ENCODE measurements at regions of chr22 and their contacts with region 1.

Region 1: GRCh38 chr22:28882878-28883656 is at the start of gene ZNRF3:
- DNase-seq: peak; percentile 94
- H3K4me3 ChIP-seq: peak within 1 kb of the TSS; percentile 72
- H3K4me3 Mint-ChIP-seq: peak within 1 kb of the TSS; percentile 83
- H3K27ac Mint-ChIP-seq: peak within 1 kb of the TSS; percentile 93
- H3K4me1 ChIP-seq: peaks cover 35% of the 10 kb centered on the region
- H3K4me1 Mint-ChIP-seq: peaks cover 28% of the 10 kb centered on the region
- H3K27me3 ChIP-seq: no peaks in the 10 kb centered on the region
- H3K27me3 Mint-ChIP-seq: no peaks in the 10 kb centered on the region
- CTCF ChIP-seq: no peak
- total RNA-seq, gene ZNRF3: 37.9 and 41.1 TPM in 2 replicates

Region 2: GRCh38 chr22:28829358-28830181 is 53.5 kb before region 1 on chr22:
- CTCF ChIA-PET with region 1: no interaction called
- POLR2A ChIA-PET with region 1: interaction called, 9 read pairs
- intact Hi-C with region 1: loop called (anchors 2 kb)
- DNase-seq: peak; percentile 70 to 80
- H3K4me3 ChIP-seq: no peak overlapping the region
- H3K4me3 Mint-ChIP-seq: no peak overlapping the region
- H3K27ac Mint-ChIP-seq: no peak overlapping the region
- H3K4me1 ChIP-seq: 0 out of 2 replicates have a peak, but pooled peaks cover 5% of the 10 kb centered on the region
- H3K4me1 Mint-ChIP-seq: peaks cover 9% of the 10 kb centered on the region
- H3K27me3 ChIP-seq: no peaks in the 10 kb centered on the region
- H3K27me3 Mint-ChIP-seq: no peaks in the 10 kb centered on the region
- CTCF ChIP-seq: peak; percentile 93 to 97

Region 3: DNA sequence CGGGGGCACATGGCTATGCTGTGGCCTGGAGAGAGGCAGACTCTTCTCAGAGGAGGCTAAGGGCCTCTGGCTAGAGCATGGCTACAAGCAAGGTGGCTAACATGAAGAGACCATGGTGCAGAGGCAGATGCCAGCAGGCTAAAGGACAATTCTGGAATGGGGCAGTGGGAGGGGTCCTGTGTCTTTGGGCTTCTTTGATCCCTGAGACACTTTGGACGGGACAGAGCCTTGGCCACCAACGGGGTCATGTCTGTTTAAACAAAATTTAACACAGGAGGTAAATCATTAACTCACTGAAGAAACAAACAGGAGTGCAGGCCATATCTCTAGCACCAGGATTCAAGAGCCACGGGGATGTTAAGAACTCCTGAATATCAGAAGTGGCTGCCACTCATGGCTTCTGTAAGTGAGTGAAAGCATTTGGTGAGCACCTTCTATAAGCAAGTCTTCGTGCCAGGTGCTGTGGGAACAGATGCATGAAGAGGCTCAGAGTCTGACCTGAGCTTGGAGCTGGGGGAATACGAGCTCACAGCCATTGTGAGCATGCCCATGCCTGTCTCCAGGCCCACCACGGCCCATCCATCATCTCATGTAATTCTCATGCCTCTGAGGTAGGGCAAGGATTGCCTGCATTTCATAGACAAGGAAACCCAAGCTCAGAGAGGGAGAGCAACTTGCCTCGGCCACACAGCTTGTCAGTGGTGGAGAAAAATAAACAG is 18.0 kb before region 1 on chr22:
- CTCF ChIA-PET with region 1: no interaction called
- POLR2A ChIA-PET with region 1: no interaction called
- intact Hi-C with region 1: loop called (anchors 1 kb)
- DNase-seq: peak; percentile 85 to 91
- H3K4me3 ChIP-seq: no peak overlapping the region
- H3K4me3 Mint-ChIP-seq: peak overlapping the region; percentile 40
- H3K27ac Mint-ChIP-seq: peak overlapping the region; percentile 82
- H3K4me1 ChIP-seq: peaks cover 23% of the 10 kb centered on the region
- H3K4me1 Mint-ChIP-seq: peaks cover 36% of the 10 kb centered on the region
- H3K27me3 ChIP-seq: no peaks in the 10 kb centered on the region
- H3K27me3 Mint-ChIP-seq: no peaks in the 10 kb centered on the region
- CTCF ChIP-seq: no peak

Region 4: DNA sequence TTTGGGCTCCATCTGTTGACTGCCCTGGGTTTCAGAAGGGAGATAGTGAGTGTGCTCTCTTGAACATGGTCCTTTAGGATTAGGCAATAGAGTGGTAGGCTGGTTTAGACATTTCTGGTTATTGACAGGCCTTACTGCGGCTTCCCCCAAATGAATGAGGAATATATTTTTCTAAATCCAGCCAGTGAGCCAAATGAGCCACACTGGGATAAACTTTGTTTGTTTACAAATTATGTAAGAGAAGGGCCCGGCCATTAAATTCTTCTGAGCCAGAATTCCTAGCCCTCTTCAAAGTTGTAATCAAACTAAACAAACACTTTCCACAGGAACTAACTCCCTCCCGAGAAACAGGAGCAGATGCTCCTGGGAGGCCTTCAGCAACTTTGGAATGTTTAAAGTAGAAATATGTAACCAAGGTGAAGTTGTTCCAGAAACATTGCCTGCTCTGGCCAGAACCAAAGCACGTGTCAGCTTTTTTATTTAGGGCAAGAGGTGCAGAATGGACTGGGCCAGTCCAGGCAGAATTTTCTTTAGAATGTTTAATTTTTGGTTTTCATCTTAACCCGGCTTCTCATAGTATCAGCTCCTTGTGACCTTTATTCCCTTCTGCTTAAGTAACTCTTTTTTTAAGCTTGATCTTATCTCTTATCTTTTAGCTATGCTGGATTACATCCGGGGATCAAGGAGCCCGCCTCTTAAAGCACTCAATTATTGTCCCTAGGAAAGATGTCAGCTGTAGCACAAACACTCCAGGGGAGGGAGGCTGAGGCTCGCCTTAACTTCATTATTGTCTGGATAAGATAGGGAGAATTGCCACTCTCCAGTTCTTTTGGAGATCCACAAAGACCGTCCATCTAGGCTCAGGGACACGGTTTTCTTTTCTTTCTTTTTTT is 29.0 kb after region 1 on chr22:
- CTCF ChIA-PET with region 1: interaction called, 16 read pairs
- POLR2A ChIA-PET with region 1: interaction called, 5 read pairs
- intact Hi-C with region 1: loop called (anchors 1 kb)
- DNase-seq: peak; percentile 87 to 94
- H3K4me3 ChIP-seq: no peak overlapping the region
- H3K4me3 Mint-ChIP-seq: peak overlapping the region; percentile 59
- H3K27ac Mint-ChIP-seq: peak overlapping the region; percentile 91
- H3K4me1 ChIP-seq: peaks cover 75% of the 10 kb centered on the region
- H3K4me1 Mint-ChIP-seq: peaks cover 52% of the 10 kb centered on the region
- H3K27me3 ChIP-seq: no peaks in the 10 kb centered on the region
- H3K27me3 Mint-ChIP-seq: no peaks in the 10 kb centered on the region
- CTCF ChIP-seq: no peak

Region 5: DNA sequence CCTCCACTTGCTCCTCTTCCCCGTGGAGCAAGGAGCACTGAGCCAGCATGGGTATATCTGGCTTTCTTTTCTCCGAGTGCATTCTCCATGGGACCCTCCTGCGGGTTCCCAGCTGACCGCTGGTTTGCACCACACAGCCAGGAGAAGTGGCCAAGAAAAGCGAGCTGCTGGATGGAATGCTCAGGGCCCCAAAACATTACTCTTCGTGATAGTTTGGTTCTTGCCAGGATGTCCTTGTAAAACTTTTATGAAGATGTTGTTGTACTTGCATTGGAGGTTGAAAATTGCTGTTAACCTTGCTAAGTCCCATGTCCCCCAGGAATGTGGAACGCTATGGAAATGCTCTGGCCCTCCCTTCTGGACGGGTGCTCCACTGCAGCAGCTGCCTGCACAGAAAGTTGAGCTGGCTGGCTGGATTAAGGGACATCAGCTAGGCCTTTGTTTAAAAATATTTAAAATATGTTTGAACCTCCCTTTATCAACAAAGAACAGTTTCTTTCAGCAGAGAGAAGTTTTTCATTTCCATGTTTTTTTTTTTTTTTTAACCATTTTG is 69.0 kb after region 1 on chr22:
- CTCF ChIA-PET with region 1: interaction called, 9 read pairs
- POLR2A ChIA-PET with region 1: interaction called, 3 read pairs
- intact Hi-C with region 1: loop called (anchors 2 kb)
- DNase-seq: peak; percentile 75 to 78
- H3K4me3 ChIP-seq: no peak overlapping the region
- H3K4me3 Mint-ChIP-seq: peak overlapping the region; percentile 28
- H3K27ac Mint-ChIP-seq: peak overlapping the region; percentile 91
- H3K4me1 ChIP-seq: peaks cover 63% of the 10 kb centered on the region
- H3K4me1 Mint-ChIP-seq: peaks cover 48% of the 10 kb centered on the region
- H3K27me3 ChIP-seq: no peaks in the 10 kb centered on the region
- H3K27me3 Mint-ChIP-seq: no peaks in the 10 kb centered on the region
- CTCF ChIP-seq: peak in 1 of 2 experiments; percentile 62